ENCODE measurements at regions of chr19 and their contacts with region 1.

Region 1: DNA sequence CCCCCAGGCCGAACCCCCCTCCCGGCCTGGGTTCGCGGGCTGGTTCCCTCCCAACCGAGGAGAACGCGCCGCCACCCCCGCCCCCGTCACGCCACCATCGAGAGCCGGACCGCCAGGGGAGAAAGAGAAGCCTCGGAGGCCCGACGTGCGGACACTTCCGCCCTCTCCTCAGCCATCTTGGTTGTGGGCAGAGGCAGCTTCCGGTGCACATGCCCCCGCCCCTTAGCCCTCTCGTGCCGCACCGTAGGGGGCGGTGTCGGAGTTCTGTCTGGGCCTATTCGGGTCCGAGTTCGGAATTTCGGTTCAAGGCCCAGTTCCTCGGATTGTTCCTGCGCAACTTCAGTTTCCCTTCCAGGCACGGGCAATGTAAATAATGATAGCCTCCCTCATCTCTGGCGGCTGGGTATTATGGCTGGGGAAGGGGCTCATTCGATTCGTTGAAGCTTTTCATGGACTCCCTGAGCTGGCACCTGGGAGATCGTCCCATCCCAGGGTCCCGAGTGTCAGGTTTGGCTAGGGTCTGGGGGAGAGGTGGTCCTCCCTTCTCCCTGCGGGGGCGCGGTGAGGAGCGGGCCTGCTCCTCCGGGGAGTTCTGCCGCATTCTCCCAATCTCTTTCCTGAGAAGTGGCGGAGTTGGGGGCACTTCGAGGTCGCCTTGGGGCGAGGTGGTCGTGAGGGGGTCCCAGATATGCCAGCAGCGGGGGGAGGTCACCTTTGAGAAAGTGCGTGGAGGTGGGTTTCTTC is at the starts of genes IER2 and STX10:
- DNase-seq: peak; percentile 95 to 97 (median 96)
- H3K4me3 ChIP-seq: peak within 1 kb of the TSS; percentile 65 to 99 (median 92)
- H3K27ac ChIP-seq: peak within 1 kb of the TSS; percentile 88 to 96
- H3K4me1 ChIP-seq: peaks cover 0 to 51% (median 37%) of the 10 kb centered on the region in 4 experiments
- H3K27me3 ChIP-seq: no peaks in the 10 kb centered on the region

Region 2: DNA sequence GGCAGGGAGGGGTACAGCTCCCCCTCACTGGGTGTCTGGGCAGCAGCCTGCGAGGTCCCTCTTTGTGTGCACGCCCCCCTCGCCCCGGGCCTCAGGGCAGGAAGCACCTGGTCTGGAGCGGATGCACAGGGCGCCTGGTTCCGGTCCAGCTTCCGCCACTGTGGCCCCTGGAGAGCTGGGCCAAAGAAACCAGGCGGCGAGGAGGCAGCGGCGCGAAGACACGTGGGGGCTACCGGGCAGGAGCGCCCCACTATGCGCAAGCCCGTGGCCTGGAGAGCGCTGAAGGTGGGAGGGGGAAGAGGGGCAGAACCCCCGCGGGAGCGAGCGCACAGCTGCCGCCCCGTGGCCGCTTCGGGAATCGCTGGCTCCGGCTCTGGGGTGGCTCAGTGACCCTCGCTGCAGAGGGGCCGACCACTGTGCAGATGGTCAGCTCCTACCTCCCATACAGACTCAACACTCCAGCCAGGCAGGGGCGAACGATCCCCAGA is 46.0 kb before region 1 on chr19:
- CTCF ChIA-PET with region 1: interaction called, 8 read pairs
- POLR2A ChIA-PET with region 1: interaction called, 156 read pairs
- DNase-seq: peak; percentile 98 to 100 (median 99)
- H3K4me3 ChIP-seq: peak overlapping the region in 6 of 7 experiments; percentile 1 to 100 (median 78)
- H3K27ac ChIP-seq: peak overlapping the region; percentile 90 to 95
- H3K4me1 ChIP-seq: peaks cover 3 to 62% (median 52%) of the 10 kb centered on the region in 4 experiments
- H3K27me3 ChIP-seq: no peaks in the 10 kb centered on the region

Region 3: GRCh38 chr19:13117772-13118423 is 32.5 kb before region 1 on chr19 and contains the start of gene NACC1:
- CTCF ChIA-PET with region 1: interaction called, 9 read pairs
- POLR2A ChIA-PET with region 1: interaction called, 11 read pairs
- DNase-seq: peak; percentile 87 to 94 (median 92)
- H3K4me3 ChIP-seq: peak within 1 kb of the TSS; percentile 83 to 97 (median 95)
- H3K27ac ChIP-seq: peak within 1 kb of the TSS; percentile 50 to 83
- H3K4me1 ChIP-seq: peaks cover 0 to 46% (median 36%) of the 10 kb centered on the region in 4 experiments
- H3K27me3 ChIP-seq: no peaks in the 10 kb centered on the region

Region 4: GRCh38 chr19:13132471-13133180 is 17.7 kb before region 1 on chr19:
- CTCF ChIA-PET with region 1: interaction called, 13 read pairs
- POLR2A ChIA-PET with region 1: interaction called, 4 read pairs
- DNase-seq: peak; percentile 57 to 91 (median 84)
- H3K4me3 ChIP-seq: no peak overlapping the region
- H3K27ac ChIP-seq: no peak overlapping the region
- H3K4me1 ChIP-seq: peaks cover 0 to 14% (median 9%) of the 10 kb centered on the region in 4 experiments
- H3K27me3 ChIP-seq: no peaks in the 10 kb centered on the region

Region 5: DNA sequence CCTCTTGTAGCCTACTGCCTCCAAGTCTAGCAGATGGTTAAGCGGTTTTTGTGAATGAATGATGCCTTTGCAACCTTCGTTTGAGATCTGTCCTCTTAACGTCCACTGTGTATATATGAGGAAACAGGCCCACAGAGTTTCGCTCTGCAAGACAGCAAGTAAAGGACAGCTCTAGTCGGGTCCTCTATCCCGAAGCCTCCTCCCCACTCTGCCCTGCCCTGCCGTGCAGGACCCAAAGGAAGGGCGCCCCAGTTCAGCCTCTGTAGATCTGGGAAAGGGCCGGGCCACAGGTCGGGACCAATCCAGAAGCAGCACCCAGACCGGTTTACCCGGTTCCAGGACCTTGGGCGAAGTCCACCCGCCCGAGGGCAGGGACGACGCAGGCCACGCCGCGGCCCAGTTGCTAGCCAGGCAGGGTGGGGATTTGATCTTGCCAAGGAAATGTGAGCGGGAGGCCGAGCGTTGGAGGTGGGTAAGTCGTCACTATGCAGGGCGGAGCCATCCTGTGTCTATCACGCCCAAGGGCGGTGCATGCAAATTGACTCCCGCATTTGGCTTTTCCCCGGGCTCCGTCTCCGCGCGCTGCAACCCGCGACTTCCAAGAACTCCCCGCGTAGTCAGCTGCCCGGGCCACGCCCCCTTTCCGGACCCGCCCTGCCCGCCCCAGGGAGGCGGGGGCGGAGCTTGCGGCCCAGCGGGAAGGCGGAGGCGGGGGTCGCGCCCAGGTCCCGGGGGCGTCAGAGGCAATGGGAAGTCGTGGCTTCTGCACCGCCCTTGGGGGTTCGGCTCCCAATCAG is 12.4 kb after region 1 on chr19:
- CTCF ChIA-PET with region 1: interaction called, 32 read pairs
- POLR2A ChIA-PET with region 1: interaction called, 95 read pairs
- DNase-seq: peak; percentile 88 to 90 (median 90)
- H3K4me3 ChIP-seq: peak overlapping the region; percentile 30 to 78 (median 59)
- H3K27ac ChIP-seq: peak overlapping the region in 1 of 2 experiments; percentile 83
- H3K4me1 ChIP-seq: peaks cover 12 to 74% (median 60%) of the 10 kb centered on the region in 4 experiments
- H3K27me3 ChIP-seq: no peaks in the 10 kb centered on the region

Region 6: DNA sequence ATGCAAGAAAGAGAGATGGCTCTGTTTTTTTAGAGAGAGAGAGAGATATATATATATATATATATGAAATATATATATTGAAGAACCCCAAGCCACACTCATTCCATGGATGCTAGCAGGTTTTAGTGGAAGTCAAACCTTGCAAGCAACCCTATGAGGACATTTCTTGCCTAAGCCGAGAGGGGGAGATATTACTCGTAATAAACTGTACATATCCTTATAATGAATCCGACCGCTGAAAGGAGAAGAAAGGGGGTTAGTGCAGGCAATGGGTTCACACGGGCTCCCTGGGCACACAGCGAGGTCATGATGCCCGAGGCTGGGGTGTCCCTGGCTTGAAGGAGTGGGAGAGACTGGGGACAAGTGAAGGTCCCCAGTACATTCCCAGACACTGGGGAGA is 78.2 kb after region 1 on chr19:
- CTCF ChIA-PET with region 1: no interaction called
- POLR2A ChIA-PET with region 1: no interaction called
- DNase-seq: no peak
- H3K4me3 ChIP-seq: no peak overlapping the region
- H3K27ac ChIP-seq: no peak overlapping the region
- H3K4me1 ChIP-seq: peaks cover 0 to 7% (median 2%) of the 10 kb centered on the region in 4 experiments
- H3K27me3 ChIP-seq: peaks cover 0 to 4% (median 0%) of the 10 kb centered on the region in 5 experiments

Region 7: GRCh38 chr19:13255041-13255718 is 104.8 kb after region 1 on chr19:
- CTCF ChIA-PET with region 1: no interaction called
- POLR2A ChIA-PET with region 1: no interaction called
- DNase-seq: no peak
- H3K4me3 ChIP-seq: no peak overlapping the region
- H3K27ac ChIP-seq: no peak overlapping the region
- H3K4me1 ChIP-seq: no peaks in the 10 kb centered on the region
- H3K27me3 ChIP-seq: peaks cover 0 to 3% (median 0%) of the 10 kb centered on the region in 5 experiments